ENCODE measurements at regions of chr5 and their contacts with region 1.

Region 1: DNA sequence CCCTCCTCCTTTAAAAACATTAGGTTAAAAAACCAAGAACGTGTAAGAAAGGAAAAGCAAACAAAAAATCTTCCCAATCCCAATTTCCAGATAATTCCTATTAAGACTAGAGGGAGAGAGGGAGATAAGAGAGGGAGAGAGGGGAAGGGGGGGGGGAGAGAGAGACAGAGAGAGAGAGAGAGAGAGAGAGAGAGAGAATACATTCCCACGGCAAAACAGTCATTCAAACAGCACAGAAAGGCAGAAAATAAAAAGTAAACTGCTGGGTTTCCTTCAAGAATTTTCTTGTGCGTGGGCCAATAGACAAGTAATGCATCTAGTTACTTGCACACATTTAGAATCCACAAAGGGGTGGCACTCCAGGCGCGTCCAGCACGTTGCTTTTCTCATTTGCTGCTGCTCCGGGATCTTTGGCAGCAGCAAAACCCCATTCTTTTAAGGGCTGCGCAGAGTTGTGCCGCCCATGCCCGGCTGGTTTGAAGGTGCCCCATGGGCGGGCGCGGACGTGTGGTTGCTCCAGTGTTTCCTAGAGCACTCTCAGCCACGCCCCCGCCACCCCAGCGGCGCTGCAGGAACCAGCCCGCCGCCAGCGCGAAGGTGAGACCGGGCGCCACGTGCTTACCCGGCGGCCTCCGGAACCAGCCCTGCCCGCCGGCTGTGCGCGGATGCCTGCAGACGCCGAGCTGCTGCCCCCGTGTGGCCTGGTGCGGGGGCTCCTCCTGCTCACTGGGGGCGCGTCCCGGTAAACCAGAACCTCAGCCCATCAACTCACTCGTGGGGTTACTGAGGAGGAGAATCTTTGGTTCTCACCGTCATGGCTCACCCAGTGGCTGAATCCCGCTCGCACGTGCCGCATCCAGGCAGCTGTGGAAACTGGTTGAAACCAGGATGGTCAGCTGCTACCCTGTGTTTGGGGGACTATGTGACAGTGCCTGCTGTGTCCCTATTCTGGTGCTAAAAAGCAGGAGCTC is 44.6 kb downstream of the STC2 start:
- DNase-seq: no peak
- ATAC-seq: peak; percentile 96
- H3K4me3 ChIP-seq: peak overlapping the region; percentile 21 to 52
- H3K27ac ChIP-seq: no peak overlapping the region
- H3K4me1 ChIP-seq: no peaks in the 10 kb centered on the region
- H3K27me3 ChIP-seq: no peaks in the 10 kb centered on the region
- CTCF ChIP-seq: peak; percentile 93

Region 2: GRCh38 chr5:172707285-172708182 is 576.1 kb before region 1 on chr5:
- CTCF ChIA-PET with region 1: interaction called, 3 read pairs
- POLR2A ChIA-PET with region 1: no interaction called
- in situ Hi-C with region 1: no loop called
- intact Hi-C with region 1: loop called (anchors 5 kb)
- DNase-seq: no peak
- ATAC-seq: peak; percentile 95
- H3K4me3 ChIP-seq: no peak overlapping the region
- H3K27ac ChIP-seq: no peak overlapping the region
- H3K4me1 ChIP-seq: no peaks in the 10 kb centered on the region
- H3K27me3 ChIP-seq: no peaks in the 10 kb centered on the region
- CTCF ChIP-seq: peak; percentile 90

Region 3: DNA sequence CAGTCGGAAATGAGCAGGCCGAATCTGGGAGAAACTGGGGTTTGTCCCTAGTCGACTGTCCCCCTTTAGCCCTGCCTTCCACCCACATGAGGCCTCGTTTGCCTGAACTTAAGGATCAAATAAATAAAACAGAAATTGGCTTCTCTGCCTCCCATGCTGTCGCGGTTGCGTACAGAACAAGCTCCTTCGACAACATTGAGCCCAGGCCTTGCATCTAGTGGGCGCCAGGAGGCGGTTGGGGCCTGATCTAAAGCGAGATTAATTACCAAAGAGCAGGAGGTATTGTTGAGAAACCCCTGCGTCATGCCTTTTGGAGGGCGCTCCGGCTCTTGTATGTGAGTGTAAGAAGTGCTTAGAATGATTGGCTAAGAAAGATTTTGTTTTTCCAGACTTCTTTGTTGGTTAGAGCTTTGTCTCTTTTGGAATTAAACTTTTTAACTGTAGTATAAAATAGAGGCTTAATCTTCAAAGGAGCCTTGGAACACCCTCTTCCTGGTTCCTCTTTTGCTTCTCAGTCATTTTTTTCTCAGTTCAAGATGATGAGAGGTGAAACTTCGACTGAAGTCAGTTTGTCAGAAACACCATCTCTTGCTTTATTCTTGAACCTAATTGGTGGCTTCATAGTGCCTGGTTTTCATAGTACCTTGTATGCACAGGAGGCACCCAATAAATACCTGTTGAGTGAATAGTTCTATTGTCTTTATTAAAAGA is 299.2 kb before region 1 on chr5:
- CTCF ChIA-PET with region 1: interaction called, 7 read pairs
- POLR2A ChIA-PET with region 1: no interaction called
- in situ Hi-C with region 1: no loop called
- intact Hi-C with region 1: loop called (anchors 5 kb)
- DNase-seq: peak; percentile 43
- ATAC-seq: peak; percentile 67
- H3K4me3 ChIP-seq: peak overlapping the region; percentile 82 to 99
- H3K27ac ChIP-seq: peak overlapping the region; percentile 92
- H3K4me1 ChIP-seq: peaks cover 9% of the 10 kb centered on the region
- H3K27me3 ChIP-seq: no peaks in the 10 kb centered on the region
- CTCF ChIP-seq: no peak; the same call in 1 of the 2 replicates

Region 4: GRCh38 chr5:173144200-173145176 is 139.1 kb before region 1 on chr5 and contains the start of gene BNIP1:
- CTCF ChIA-PET with region 1: no interaction called
- POLR2A ChIA-PET with region 1: interaction called, 11 read pairs
- in situ Hi-C with region 1: no loop called
- intact Hi-C with region 1: no loop called
- DNase-seq: peak; percentile 86
- ATAC-seq: peak; percentile 97
- H3K4me3 ChIP-seq: peak within 1 kb of the TSS; percentile 88 to 93
- H3K27ac ChIP-seq: peak within 1 kb of the TSS; percentile 92
- H3K4me1 ChIP-seq: peaks cover 6% of the 10 kb centered on the region; the same call in 1 of the 2 replicates
- H3K27me3 ChIP-seq: no peaks in the 10 kb centered on the region
- CTCF ChIP-seq: peak; percentile 98
- total RNA-seq, gene BNIP1: 12.3 TPM

Region 5: GRCh38 chr5:173165177-173166016 is 118.2 kb before region 1 on chr5:
- CTCF ChIA-PET with region 1: no interaction called
- POLR2A ChIA-PET with region 1: no interaction called
- in situ Hi-C with region 1: no loop called
- intact Hi-C with region 1: loop called (anchors 2 kb)
- DNase-seq: no peak
- ATAC-seq: no peak
- H3K4me3 ChIP-seq: no peak overlapping the region
- H3K27ac ChIP-seq: no peak overlapping the region
- H3K4me1 ChIP-seq: no peaks in the 10 kb centered on the region
- H3K27me3 ChIP-seq: no peaks in the 10 kb centered on the region
- CTCF ChIP-seq: no peak

Region 6: GRCh38 chr5:173245319-173246134 is 38.1 kb before region 1 on chr5:
- CTCF ChIA-PET with region 1: interaction called, 13 read pairs
- POLR2A ChIA-PET with region 1: no interaction called
- in situ Hi-C with region 1: no loop called
- intact Hi-C with region 1: no loop called
- DNase-seq: no peak
- ATAC-seq: no peak
- H3K4me3 ChIP-seq: no peak overlapping the region
- H3K27ac ChIP-seq: no peak overlapping the region
- H3K4me1 ChIP-seq: no peaks in the 10 kb centered on the region
- H3K27me3 ChIP-seq: peaks cover 11% of the 10 kb centered on the region
- CTCF ChIP-seq: no peak